ENCODE measurements at regions of chr19 and their contacts with region 1.

Region 1: GRCh38 chr19:5690125-5690954 is at the start of gene RPL36:
- H3K4me3 ChIP-seq: peak within 1 kb of the TSS; percentile 97
- H3K27ac ChIP-seq: peak within 1 kb of the TSS; percentile 100
- H3K4me1 ChIP-seq: no peaks in the 10 kb centered on the region; the same call in 1 of the 2 replicates
- CTCF ChIP-seq: peak; percentile 100

Region 2: DNA sequence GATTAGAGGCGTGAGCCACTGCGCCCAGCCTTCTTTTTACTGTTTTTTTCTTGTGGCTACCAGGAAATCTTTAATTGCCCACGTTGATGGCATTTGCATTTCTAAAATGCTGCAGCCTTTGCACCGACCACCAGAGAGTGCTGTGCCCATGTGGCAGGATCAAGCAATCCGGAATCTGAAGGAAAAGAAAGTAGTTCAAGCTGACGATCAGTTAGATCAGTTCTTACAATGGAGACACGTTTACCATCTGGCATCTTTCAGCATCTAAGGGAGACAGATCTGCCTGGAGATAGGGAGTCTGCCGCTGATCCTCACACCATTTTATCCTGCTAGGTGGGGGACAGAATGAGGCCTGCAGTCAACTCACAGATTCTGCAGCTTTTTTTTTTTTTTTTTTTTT is 142.5 kb before region 1 on chr19:
- CTCF ChIA-PET with region 1: interaction called, 12 read pairs
- POLR2A ChIA-PET with region 1: interaction called, 3 read pairs
- H3K4me3 ChIP-seq: no peak overlapping the region
- H3K27ac ChIP-seq: no peak overlapping the region
- H3K4me1 ChIP-seq: no peaks in the 10 kb centered on the region
- CTCF ChIP-seq: peak; percentile 71; the same call in 1 of the 2 replicates

Region 3: GRCh38 chr19:5622463-5623396 is 67.6 kb before region 1 on chr19 and contains the starts of genes SAFB and SAFB2:
- CTCF ChIA-PET with region 1: interaction called, 7 read pairs
- POLR2A ChIA-PET with region 1: interaction called, 49 read pairs
- H3K4me3 ChIP-seq: peak within 1 kb of the TSS; percentile 93
- H3K27ac ChIP-seq: peak within 1 kb of the TSS; percentile 89
- H3K4me1 ChIP-seq: peaks cover 18% of the 10 kb centered on the region
- CTCF ChIP-seq: no peak; the same call in 1 of the 2 replicates

Region 4: GRCh38 chr19:5680083-5680436 is 10.3 kb before region 1 on chr19:
- CTCF ChIA-PET with region 1: interaction called, 9 read pairs
- POLR2A ChIA-PET with region 1: interaction called, 24 read pairs
- H3K4me3 ChIP-seq: peak overlapping the region; percentile 94
- H3K27ac ChIP-seq: peak overlapping the region; percentile 25; the same call in 1 of the 2 replicates
- H3K4me1 ChIP-seq: no peaks in the 10 kb centered on the region
- CTCF ChIP-seq: peak; percentile 67; the same call in 1 of the 2 replicates

Region 5: GRCh38 chr19:5707576-5708575 is 17.5 kb after region 1 on chr19:
- CTCF ChIA-PET with region 1: interaction called, 15 read pairs
- POLR2A ChIA-PET with region 1: interaction called, 14 read pairs
- H3K4me3 ChIP-seq: no peak overlapping the region
- H3K27ac ChIP-seq: no peak overlapping the region
- H3K4me1 ChIP-seq: no peaks in the 10 kb centered on the region
- CTCF ChIP-seq: no peak

Region 6: DNA sequence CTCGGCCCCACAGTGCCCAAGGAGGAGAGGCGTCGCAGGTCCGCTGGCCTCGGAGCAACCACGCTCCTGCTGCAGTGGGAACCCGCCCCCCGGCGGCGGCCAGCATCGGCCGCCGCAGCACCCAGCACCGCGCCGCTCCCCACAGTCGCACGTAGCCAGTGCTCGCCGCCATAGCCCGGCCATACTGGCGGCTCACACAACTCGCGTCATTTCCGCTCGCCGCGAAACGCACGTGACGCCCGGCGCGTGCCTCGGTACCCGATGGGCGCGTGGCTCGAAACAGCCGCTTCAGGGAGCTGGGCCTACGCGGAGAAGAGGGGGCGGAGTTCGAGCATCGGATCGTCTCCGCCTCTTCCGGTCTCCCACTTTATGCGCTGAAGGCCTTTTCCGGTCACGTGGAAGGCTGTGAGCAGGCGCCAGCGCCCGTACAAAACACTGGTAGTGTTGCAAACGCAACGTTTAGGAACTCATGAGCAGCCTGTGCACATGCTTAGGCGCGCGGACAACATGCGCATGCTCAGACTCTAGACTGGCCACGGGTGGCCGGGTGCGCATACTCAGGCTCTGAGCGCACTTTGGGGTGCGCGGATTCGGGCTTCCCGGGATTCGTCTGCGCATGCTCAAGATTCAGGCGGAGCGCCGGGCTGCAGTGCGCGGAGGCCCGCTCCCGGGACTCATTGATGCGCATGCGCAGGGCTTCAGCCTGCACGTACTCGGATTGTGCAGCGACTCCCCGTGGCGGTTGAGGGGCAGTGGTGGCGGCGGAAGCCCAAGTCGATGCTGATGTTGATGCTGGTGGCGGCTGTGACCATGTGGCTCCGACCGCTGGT is 29.8 kb after region 1 on chr19 and contains the starts of genes CATSPERD and LONP1:
- CTCF ChIA-PET with region 1: interaction called, 7 read pairs
- POLR2A ChIA-PET with region 1: interaction called, 62 read pairs
- H3K4me3 ChIP-seq: peak within 1 kb of the TSS; percentile 68
- H3K27ac ChIP-seq: peak within 1 kb of the TSS; percentile 80
- H3K4me1 ChIP-seq: peaks cover 12% of the 10 kb centered on the region; the same call in 1 of the 2 replicates
- CTCF ChIP-seq: peak; percentile 99

Measured in HEK293 (cell line).